ENCODE measurements at regions of chr11 and their contacts with region 1.

Region 1: DNA sequence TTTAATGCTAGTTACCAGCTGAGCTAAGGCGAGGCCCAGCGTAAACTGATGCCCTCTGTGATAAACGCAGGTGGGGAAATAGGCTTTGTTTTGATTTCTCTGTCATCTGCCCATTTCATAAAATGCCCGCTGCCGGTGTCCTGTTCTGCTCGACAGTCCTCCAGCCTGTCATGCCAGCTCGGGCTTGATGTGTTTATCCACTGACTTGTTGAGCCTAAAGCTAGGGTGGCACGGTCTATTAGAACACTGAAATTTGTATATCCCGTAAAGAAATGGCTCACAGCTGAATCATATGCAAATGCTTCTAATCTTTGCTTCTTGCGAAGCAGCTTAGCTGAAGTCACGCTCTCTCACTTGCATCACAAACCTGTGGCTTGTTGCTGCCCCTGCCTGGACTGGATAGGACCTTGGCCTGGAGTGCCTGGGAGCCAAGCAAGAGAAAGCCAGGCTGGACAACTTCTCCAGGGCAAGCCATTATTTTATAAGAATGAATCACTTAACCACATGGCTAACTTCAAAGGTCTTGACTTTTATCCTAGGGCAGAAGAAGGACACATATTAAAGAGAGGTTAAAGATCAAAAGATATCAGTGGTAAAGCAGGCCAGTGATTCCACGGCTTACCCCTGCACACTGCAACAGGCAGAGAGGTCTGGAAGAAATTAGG is 33.1 kb downstream of the EHF start:
- DNase-seq: peak; percentile 97
- ATAC-seq: peak; percentile 86
- H3K4me3 ChIP-seq: peak overlapping the region; percentile 3; the same call in 1 of the 2 replicates
- H3K27ac ChIP-seq: peak overlapping the region; percentile 99
- H3K4me1 ChIP-seq: peaks cover 52% of the 10 kb centered on the region
- H3K27me3 ChIP-seq: no peaks in the 10 kb centered on the region
- CTCF ChIP-seq: peak; percentile 49; the same call in 1 of the 2 replicates

Region 2: DNA sequence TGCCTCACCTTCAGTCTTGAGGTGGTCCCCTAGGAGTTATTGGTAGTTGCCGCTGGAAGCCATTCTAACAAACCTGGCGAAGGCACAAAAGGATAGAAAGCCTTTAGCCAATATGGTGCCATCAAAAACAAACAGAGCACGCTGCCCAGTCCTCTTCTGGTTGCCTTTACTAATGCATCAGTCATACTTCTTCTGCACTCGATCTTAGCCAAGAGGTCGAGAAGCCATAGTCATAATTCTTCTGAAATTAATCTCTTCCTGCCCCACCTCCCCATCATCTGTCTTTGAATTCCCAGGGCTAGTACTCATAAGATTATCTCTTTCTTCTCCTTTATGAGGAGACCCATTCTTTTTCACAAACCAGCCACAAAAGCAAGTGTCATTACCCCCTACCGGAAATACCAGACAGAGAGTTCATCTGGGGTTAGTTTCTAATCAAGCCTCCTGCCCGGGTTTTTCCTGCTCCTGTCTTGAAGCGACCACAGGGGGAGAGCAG is 54.5 kb before region 1 on chr11:
- CTCF ChIA-PET with region 1: no interaction called
- POLR2A ChIA-PET with region 1: no interaction called
- intact Hi-C with region 1: loop called (anchors 2 kb)
- DNase-seq: peak; percentile 93
- ATAC-seq: peak; percentile 87
- H3K4me3 ChIP-seq: no peak overlapping the region
- H3K27ac ChIP-seq: peak overlapping the region; percentile 92
- H3K4me1 ChIP-seq: peaks cover 32% of the 10 kb centered on the region
- H3K27me3 ChIP-seq: no peaks in the 10 kb centered on the region
- CTCF ChIP-seq: no peak

Region 3: DNA sequence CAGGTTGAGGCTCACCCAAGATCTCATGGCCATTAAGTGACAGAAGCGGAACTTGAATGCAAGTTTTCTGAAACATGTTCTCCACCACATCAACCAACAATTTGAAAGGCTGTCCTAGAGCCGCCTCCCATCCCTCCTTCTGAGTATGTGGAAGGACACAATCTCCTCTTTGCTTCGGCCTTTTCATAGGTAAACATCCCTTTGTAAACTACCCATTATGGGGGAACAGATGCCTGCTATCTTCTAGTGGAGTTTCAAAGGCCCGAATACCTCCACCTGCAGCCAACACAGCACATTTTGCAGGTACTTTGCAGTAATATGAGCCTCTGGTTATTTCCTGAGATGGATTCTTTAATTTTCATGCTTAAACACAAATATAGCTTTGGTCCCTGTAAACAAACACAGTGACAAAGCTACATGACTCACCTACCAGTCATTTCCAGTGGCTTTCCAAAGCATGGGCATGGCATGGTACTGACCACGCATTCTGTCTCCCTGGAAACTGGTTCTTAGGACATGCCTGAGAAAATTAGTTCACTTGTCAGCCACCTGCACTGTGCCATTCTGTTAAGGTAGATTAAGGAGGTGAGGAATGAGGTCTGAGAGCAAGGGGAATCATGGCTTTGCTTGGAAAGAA is 27.1 kb after region 1 on chr11:
- CTCF ChIA-PET with region 1: interaction called, 3 read pairs
- POLR2A ChIA-PET with region 1: interaction called, 3 read pairs
- intact Hi-C with region 1: loop called (anchors 1 kb)
- DNase-seq: peak; percentile 97
- ATAC-seq: peak; percentile 87
- H3K4me3 ChIP-seq: no peak overlapping the region
- H3K27ac ChIP-seq: peak overlapping the region; percentile 91
- H3K4me1 ChIP-seq: peaks cover 52% of the 10 kb centered on the region
- H3K27me3 ChIP-seq: no peaks in the 10 kb centered on the region
- CTCF ChIP-seq: no peak

Region 4: DNA sequence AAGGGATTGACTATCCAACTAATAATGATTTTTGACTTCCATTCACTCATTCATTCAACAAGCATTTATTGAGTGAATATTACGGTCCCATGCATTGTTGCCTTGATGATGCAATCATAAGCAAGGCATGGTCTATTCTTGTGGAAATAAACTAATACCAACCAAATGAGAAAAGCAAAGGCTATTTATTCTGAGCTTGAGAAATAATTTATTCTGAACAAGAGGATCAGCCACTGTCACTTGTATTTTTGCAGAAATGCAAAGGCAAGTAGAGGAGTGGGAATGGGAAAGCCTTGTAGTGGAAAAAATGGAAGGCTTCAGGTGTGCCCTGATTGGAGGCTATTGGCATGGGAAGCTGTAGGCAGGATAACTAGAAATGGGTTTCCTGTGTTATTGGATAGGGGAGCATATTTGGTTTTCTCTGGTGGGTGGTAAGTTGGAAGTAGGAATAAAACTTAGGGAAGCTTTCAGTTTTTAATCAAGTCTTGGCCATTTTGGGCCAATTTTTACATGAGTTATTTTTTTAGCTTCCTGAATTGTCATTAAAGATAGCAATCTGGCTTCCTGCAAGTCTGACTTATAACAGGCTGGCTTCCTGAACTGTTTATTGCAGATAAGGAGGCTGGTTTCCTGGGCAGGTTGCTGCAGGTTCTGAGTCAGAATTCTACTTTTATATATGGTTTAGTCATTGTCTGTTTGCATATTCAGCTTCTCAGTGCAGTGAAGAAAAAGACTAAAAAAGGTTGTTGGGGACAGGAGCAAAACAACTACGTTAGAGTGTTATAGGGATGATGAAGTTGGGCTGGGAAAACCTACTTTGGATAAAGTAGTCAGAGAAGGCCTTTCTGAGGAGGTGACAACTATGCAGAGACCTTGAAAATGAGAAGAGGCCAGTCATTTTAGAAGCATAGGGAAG is 155.5 kb after region 1 on chr11:
- CTCF ChIA-PET with region 1: no interaction called
- POLR2A ChIA-PET with region 1: no interaction called
- intact Hi-C with region 1: loop called (anchors 5 kb)
- DNase-seq: peak; percentile 88
- ATAC-seq: peak; percentile 99
- H3K4me3 ChIP-seq: no peak overlapping the region
- H3K27ac ChIP-seq: peak overlapping the region; percentile 93
- H3K4me1 ChIP-seq: peaks cover 28% of the 10 kb centered on the region
- H3K27me3 ChIP-seq: no peaks in the 10 kb centered on the region
- CTCF ChIP-seq: no peak